ENCODE measurements at regions of chr10 and their contacts with region 1.

Region 1: GRCh38 chr10:2927958-2928840 is 139.1 kb upstream of the PFKP start:
- DNase-seq: peak; percentile 83

Region 2: GRCh38 chr10:2839081-2839725 is 89.0 kb before region 1 on chr10:
- CTCF ChIA-PET with region 1: no interaction called
- POLR2A ChIA-PET with region 1: no interaction called
- DNase-seq: peak; percentile 74

Region 3: DNA sequence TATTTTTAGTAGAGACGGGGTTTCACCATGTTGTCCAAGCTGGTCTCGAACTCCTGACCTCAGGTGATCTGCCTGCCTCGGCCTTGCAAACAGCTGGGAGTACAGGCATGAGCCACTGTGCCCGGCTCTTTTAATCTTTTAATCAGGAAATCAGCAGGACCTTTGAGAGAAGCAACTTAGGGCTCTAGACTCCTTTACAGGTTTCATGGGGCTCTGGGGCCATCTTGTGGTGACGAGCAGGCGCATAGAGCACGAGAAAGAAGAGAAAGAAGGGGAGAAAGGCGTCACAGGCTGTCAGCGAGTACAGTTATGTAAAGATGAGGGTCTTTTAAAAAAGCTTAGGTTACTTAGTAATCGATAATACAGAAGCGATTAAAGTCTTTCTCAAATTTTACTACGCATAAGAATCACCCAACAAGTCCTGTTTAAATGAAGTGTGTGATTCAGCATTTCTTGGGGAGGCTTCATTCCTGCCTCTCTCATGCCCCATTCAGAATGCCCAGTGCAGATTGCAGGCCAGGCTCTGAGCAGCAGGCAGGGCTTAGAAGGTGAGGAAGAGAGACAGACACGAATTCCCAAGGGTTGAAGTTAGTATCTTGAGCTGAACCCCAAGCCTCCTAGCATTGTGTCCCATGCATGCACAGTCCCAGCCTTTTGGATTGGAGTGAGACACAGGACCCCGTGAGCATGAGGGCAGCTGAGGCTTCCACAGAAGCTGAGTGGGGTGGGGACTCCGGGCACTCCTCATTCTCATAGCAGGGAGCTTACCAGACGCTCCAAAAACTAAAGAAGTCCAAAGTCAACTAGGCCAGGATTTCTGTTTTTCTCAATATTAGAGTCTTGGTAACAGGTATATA is 115.5 kb after region 1 on chr10:
- CTCF ChIA-PET with region 1: interaction called, 10 read pairs
- POLR2A ChIA-PET with region 1: no interaction called
- DNase-seq: peak; percentile 64